Posterior cingulate gyrus (tissue), 11 donors: ENCODE measurements at regions of chr4 and their contacts with region 1.

Region 1: GRCh38 chr4:153127760-153128494 is 76.3 kb upstream of the TRIM2 start:
- DNase-seq: peak; percentile 78 to 98 (median 92)

Region 2: GRCh38 chr4:152849350-152849749 is 278.6 kb before region 1 on chr4:
- intact Hi-C with region 1: loop called (anchors 2 kb)
- DNase-seq: no peak

Region 3: DNA sequence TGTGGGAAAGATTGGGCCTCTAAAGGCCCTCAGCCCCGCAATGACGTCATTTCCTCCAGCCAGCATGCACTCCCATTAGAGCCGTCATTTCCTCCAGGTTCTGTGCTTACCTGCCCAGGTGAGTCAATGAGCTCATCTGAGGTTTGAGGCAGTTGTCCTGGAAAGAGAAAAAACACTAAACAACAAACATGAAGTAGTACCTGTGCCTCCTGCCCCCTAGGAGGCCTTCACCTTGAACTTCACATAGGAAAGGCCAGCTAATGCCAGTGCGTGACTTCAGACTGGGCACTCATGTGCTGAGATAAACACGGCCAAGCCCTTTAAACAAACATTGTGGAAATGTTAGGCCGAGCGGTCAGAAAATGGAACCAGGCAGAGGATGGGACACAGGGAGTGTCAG is 135.9 kb before region 1 on chr4:
- intact Hi-C with region 1: no loop called
- DNase-seq: peak in 1 of 10 donors; percentile 17